ENCODE measurements at regions of chr1 and their contacts with region 1.

Region 1: GRCh38 chr1:44377925-44378784 is 23.1 kb upstream of the ERI3 start:
- DNase-seq: peak; percentile 67
- ATAC-seq: peak; percentile 85
- H3K4me3 ChIP-seq: no peak overlapping the region; a peak in 1 of 6 replicates
- H3K27ac ChIP-seq: no peak overlapping the region
- H3K4me1 ChIP-seq: peaks cover 11% of the 10 kb centered on the region
- H3K27me3 ChIP-seq: peaks cover 0 to 4% of the 10 kb centered on the region in 2 experiments; a peak in 2 of 5 replicates
- CTCF ChIP-seq: peak; percentile 89
- EP300 ChIP-seq: no peak
- POLR2A ChIP-seq: no peak
- RAD21 ChIP-seq: peak; percentile 86

Region 2: GRCh38 chr1:44500181-44501046 is 122.3 kb after region 1 on chr1:
- CTCF ChIA-PET with region 1: interaction called, 11 read pairs
- POLR2A ChIA-PET with region 1: no interaction called
- in situ Hi-C with region 1: no loop called
- intact Hi-C with region 1: no loop called
- DNase-seq: peak; percentile 59
- ATAC-seq: peak; percentile 92
- H3K4me3 ChIP-seq: peak overlapping the region in 1 of 3 experiments; percentile 38; a peak in 1 of 6 replicates
- H3K27ac ChIP-seq: no peak overlapping the region
- H3K4me1 ChIP-seq: peaks cover 22% of the 10 kb centered on the region
- H3K27me3 ChIP-seq: no peaks in the 10 kb centered on the region; a peak in 1 of 5 replicates
- CTCF ChIP-seq: peak; percentile 71
- EP300 ChIP-seq: no peak
- POLR2A ChIP-seq: no peak
- RAD21 ChIP-seq: peak; percentile 49

Region 3: DNA sequence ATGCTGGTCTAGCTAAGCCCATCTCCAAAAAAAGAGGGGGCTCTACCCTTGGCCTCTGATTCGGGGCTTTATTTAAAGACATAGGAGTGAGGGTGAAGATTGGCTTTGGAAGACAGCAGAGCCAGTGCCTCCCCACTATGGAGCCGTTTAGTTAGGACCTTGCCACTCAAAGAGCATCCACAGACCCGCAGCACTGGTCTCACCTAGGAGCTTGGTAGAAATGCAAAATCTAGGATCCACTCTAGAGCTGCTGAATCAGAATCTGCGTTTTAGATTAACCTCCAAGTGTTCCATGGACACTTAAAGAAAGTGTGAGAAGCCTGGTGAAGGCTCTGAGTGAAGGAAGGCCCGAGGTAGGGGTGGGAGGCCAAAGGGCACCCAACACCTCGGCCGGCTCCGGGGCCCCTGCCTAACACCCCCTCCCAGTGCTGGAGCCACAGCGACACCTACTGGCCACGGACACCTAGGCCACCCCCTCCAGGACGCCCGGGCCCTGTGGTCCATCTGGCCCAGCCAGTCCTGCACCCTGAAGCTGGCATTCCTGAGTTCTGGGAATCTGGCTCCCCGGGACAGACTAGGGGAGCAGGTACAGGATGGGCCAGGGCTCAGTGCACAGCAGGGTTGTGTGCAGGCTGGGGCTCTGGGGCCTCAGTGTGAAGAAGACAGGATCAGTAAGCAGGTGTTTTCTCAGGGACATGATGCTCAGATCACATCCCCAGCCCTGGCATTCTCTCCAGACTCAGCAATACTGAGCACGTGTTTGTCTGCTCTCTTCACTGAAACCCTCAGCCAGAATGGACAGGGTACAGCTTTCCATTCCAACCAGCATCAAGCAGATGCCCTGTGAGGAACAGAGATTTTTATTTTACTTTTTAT is 217.0 kb after region 1 on chr1:
- CTCF ChIA-PET with region 1: interaction called, 44 read pairs
- POLR2A ChIA-PET with region 1: no interaction called
- in situ Hi-C with region 1: loop called (anchors 5 kb)
- intact Hi-C with region 1: loop called (anchors 1 kb)
- DNase-seq: peak; percentile 43
- ATAC-seq: peak; percentile 97
- H3K4me3 ChIP-seq: no peak overlapping the region
- H3K27ac ChIP-seq: no peak overlapping the region
- H3K4me1 ChIP-seq: peaks cover 7% of the 10 kb centered on the region; the same call in 1 of the 2 replicates
- H3K27me3 ChIP-seq: 0 out of 5 replicates have a peak, but pooled peaks cover 0 to 4% of the 10 kb centered on the region in 2 experiments
- CTCF ChIP-seq: peak; percentile 98
- EP300 ChIP-seq: no peak
- POLR2A ChIP-seq: no peak
- RAD21 ChIP-seq: peak; percentile 92